CD4-positive, alpha-beta memory T cell (primary cell): ENCODE measurements at regions of chr1 and their contacts with region 1.

Region 1: GRCh38 chr1:24688621-24689195 is 45.6 kb downstream of the SRRM1 start:
- DNase-seq: peak; percentile 37 to 57 (median 49)
- H3K4me3 ChIP-seq: no peak overlapping the region
- H3K4me3 Mint-ChIP-seq: no peak overlapping the region
- H3K27ac ChIP-seq: no peak overlapping the region
- H3K27ac Mint-ChIP-seq: no peak overlapping the region
- H3K4me1 ChIP-seq: no peaks in the 10 kb centered on the region
- H3K4me1 Mint-ChIP-seq: peaks cover 0 to 4% (median 2%) of the 10 kb centered on the region in 4 donors
- H3K27me3 ChIP-seq: no peaks in the 10 kb centered on the region
- H3K27me3 Mint-ChIP-seq: no peaks in the 10 kb centered on the region

Region 2: GRCh38 chr1:24481843-24482610 is 206.7 kb before region 1 on chr1:
- CTCF ChIA-PET with region 1: no interaction called
- POLR2A ChIA-PET with region 1: no interaction called
- intact Hi-C with region 1: no loop called
- DNase-seq: peak; percentile 72 to 79 (median 77)
- H3K4me3 ChIP-seq: peak overlapping the region in 1 of 2 donors; percentile 50
- H3K4me3 Mint-ChIP-seq: peak overlapping the region; percentile 77 to 96 (median 86)
- H3K27ac ChIP-seq: peak overlapping the region; percentile 61
- H3K27ac Mint-ChIP-seq: peak overlapping the region; percentile 96 to 99 (median 99)
- H3K4me1 ChIP-seq: peaks cover 70% of the 10 kb centered on the region
- H3K4me1 Mint-ChIP-seq: peaks cover 51 to 81% (median 65%) of the 10 kb centered on the region in 4 donors
- H3K27me3 ChIP-seq: no peaks in the 10 kb centered on the region
- H3K27me3 Mint-ChIP-seq: no peaks in the 10 kb centered on the region

Region 3: DNA sequence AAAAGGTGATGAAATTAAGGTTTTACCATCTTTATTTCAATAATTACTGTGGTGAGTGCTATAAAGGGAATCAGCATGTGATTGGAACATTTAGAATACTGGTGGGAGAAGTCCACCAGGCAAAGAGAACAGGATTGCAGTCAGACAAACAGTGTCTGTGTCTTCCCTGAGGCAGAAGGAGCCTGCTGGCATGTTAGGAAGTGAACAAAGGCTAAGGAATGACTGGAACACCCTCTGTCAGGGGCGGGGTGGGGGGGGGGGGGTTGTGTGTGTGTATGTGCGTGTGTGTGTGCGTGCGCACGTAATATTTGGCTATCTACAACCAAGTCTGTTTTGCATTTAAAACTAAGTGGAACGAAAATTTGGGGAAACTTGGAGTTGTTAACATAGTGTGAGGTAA is 15.4 kb before region 1 on chr1:
- CTCF ChIA-PET with region 1: interaction called, 10 read pairs
- POLR2A ChIA-PET with region 1: no interaction called
- intact Hi-C with region 1: no loop called
- DNase-seq: no peak
- H3K4me3 ChIP-seq: no peak overlapping the region
- H3K4me3 Mint-ChIP-seq: no peak overlapping the region
- H3K27ac ChIP-seq: no peak overlapping the region
- H3K27ac Mint-ChIP-seq: peak overlapping the region in 4 of 7 donors; percentile 3 to 72 (median 26)
- H3K4me1 ChIP-seq: no peaks in the 10 kb centered on the region
- H3K4me1 Mint-ChIP-seq: peaks cover 0 to 2% (median under 1%) of the 10 kb centered on the region in 4 donors
- H3K27me3 ChIP-seq: no peaks in the 10 kb centered on the region
- H3K27me3 Mint-ChIP-seq: no peaks in the 10 kb centered on the region

Region 4: GRCh38 chr1:24705260-24706073 is 16.8 kb after region 1 on chr1:
- CTCF ChIA-PET with region 1: interaction called, 12 read pairs
- POLR2A ChIA-PET with region 1: no interaction called
- intact Hi-C with region 1: no loop called
- DNase-seq: peak in 4 of 5 donors; percentile 16 to 45 (median 28)
- H3K4me3 ChIP-seq: no peak overlapping the region
- H3K4me3 Mint-ChIP-seq: peak overlapping the region in 5 of 8 donors; percentile 0 to 60 (median 7)
- H3K27ac ChIP-seq: no peak overlapping the region
- H3K27ac Mint-ChIP-seq: peak overlapping the region in 4 of 7 donors; percentile 60 to 80 (median 64)
- H3K4me1 ChIP-seq: peaks cover 18% of the 10 kb centered on the region
- H3K4me1 Mint-ChIP-seq: peaks cover 10 to 22% (median 16%) of the 10 kb centered on the region in 4 donors
- H3K27me3 ChIP-seq: no peaks in the 10 kb centered on the region
- H3K27me3 Mint-ChIP-seq: peaks cover 0 to 2% of the 10 kb centered on the region in 2 donors

Region 5: GRCh38 chr1:24744911-24745710 is 56.4 kb after region 1 on chr1 and contains the start of gene CLIC4:
- CTCF ChIA-PET with region 1: interaction called, 26 read pairs
- POLR2A ChIA-PET with region 1: interaction called, 3 read pairs
- intact Hi-C with region 1: no loop called
- DNase-seq: peak; percentile 98 to 99 (median 99)
- H3K4me3 ChIP-seq: peak within 1 kb of the TSS in 1 of 2 donors; percentile 58
- H3K4me3 Mint-ChIP-seq: peak within 1 kb of the TSS; percentile 83 to 93 (median 87)
- H3K27ac ChIP-seq: peak within 1 kb of the TSS; percentile 55
- H3K27ac Mint-ChIP-seq: peak within 1 kb of the TSS; percentile 58 to 90 (median 86)
- H3K4me1 ChIP-seq: peaks cover 26% of the 10 kb centered on the region
- H3K4me1 Mint-ChIP-seq: peaks cover 2 to 21% (median 11%) of the 10 kb centered on the region in 4 donors
- H3K27me3 ChIP-seq: no peaks in the 10 kb centered on the region
- H3K27me3 Mint-ChIP-seq: peaks cover 6 to 9% of the 10 kb centered on the region in 2 donors
- total RNA-seq, gene CLIC4: 3.0 to 3.8 TPM

Region 6: GRCh38 chr1:24822887-24823286 is 134.2 kb after region 1 on chr1:
- CTCF ChIA-PET with region 1: interaction called, 308 read pairs
- POLR2A ChIA-PET with region 1: no interaction called
- intact Hi-C with region 1: no loop called
- DNase-seq: no peak
- H3K4me3 ChIP-seq: no peak overlapping the region
- H3K4me3 Mint-ChIP-seq: no peak overlapping the region
- H3K27ac ChIP-seq: no peak overlapping the region
- H3K27ac Mint-ChIP-seq: no peak overlapping the region
- H3K4me1 ChIP-seq: no peaks in the 10 kb centered on the region
- H3K4me1 Mint-ChIP-seq: no peaks in the 10 kb centered on the region
- H3K27me3 ChIP-seq: no peaks in the 10 kb centered on the region
- H3K27me3 Mint-ChIP-seq: peaks cover 7 to 11% of the 10 kb centered on the region in 2 donors

Region 7: GRCh38 chr1:24830680-24831272 is 142.1 kb after region 1 on chr1:
- CTCF ChIA-PET with region 1: interaction called, 308 read pairs
- POLR2A ChIA-PET with region 1: interaction called, 22 read pairs
- intact Hi-C with region 1: loop called (anchors 2 kb)
- DNase-seq: peak in 4 of 5 donors; percentile 48 to 54 (median 52)
- H3K4me3 ChIP-seq: no peak overlapping the region
- H3K4me3 Mint-ChIP-seq: no peak overlapping the region
- H3K27ac ChIP-seq: no peak overlapping the region
- H3K27ac Mint-ChIP-seq: no peak overlapping the region
- H3K4me1 ChIP-seq: no peaks in the 10 kb centered on the region
- H3K4me1 Mint-ChIP-seq: no peaks in the 10 kb centered on the region
- H3K27me3 ChIP-seq: no peaks in the 10 kb centered on the region
- H3K27me3 Mint-ChIP-seq: peaks cover 5 to 7% of the 10 kb centered on the region in 2 donors